Activated T-helper 1 cell treated with anti-CD3 and anti-CD28 coated beads, Interleukin-12 subunit alpha, Interleukin-12 subunit beta, Interleukin-2, Interleukin-4 antibody, amounts not matched to agents 30 ng/mL and 10 ng/mL and 1 ng/mL, durations not matched to agents 14 hours and 24 hours and 36 hours (primary cell): ENCODE measurements at regions of chr14 and their contacts with region 1.

Region 1: DNA sequence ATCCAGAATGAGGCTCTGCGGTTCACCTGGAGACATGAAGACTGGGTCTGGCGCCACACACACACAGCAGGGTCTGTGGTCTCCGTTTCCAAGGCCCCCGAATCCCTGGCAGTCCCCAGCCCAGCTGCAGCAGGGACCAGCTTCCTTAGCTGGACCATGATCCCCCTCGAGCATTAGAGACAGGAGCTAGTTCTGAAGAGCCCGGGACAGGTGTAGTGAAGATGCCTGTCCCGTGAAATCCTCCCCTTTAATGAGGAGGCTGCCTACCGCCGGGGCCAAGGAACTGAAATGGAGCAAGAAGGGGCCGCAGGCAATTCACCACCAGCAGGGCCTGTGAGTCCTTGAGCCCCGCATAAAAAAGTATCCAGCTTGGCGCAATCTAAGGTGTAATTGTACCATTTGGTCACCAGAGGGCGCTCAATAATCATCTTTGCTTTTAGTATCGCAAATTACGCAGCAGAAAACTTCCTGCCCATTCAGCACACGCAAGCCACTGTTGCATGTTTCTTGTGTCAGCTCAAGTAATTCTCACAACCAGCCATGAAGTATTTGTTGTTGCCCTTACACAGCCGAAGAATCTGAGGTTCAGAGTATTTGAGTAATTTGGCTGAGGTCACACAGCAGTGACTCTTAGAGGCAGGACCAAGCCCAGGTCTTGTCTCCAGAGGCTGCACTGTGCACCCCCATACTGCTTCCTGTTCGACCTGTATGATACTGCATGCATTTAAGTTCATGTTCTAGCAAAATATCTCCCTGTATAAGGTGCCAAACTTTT is 54.3 kb upstream of the PPP2R5C start:
- DNase-seq: peak; percentile 62
- H3K4me3 Mint-ChIP-seq: peak overlapping the region; percentile 0
- H3K27ac Mint-ChIP-seq: peak overlapping the region; percentile 63
- H3K4me1 Mint-ChIP-seq: peaks cover 31% of the 10 kb centered on the region
- H3K27me3 Mint-ChIP-seq: peaks cover 20% of the 10 kb centered on the region

Region 2: DNA sequence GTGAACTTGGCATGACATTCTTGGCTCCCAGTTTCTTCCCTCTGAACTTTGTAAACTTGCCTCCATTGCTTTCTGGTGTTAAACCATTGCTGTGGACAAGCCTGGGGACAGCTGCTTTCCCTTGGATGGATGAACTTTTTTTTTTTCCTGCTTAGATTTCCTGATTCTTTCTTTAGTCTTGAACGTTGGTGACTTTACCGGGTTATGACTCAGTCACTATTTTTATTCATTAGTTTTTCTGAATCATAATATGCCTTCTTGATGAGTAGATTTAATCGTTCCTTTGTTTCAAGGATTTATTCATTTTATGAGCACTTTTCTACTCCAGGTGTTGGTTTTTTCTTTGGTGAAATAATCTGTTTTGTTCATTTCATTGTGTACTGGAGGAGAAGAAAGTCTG is 648.7 kb before region 1 on chr14:
- intact Hi-C with region 1: no loop called
- DNase-seq: no peak
- H3K4me3 Mint-ChIP-seq: no peak overlapping the region
- H3K27ac Mint-ChIP-seq: no peak overlapping the region
- H3K4me1 Mint-ChIP-seq: no peaks in the 10 kb centered on the region
- H3K27me3 Mint-ChIP-seq: peaks cover 3% of the 10 kb centered on the region

Region 3: GRCh38 chr14:101336183-101336582 is 371.1 kb before region 1 on chr14:
- intact Hi-C with region 1: no loop called
- DNase-seq: no peak
- H3K4me3 Mint-ChIP-seq: no peak overlapping the region
- H3K27ac Mint-ChIP-seq: no peak overlapping the region
- H3K4me1 Mint-ChIP-seq: no peaks in the 10 kb centered on the region
- H3K27me3 Mint-ChIP-seq: peaks cover 6% of the 10 kb centered on the region

Region 4: GRCh38 chr14:101584055-101584859 is 123.0 kb before region 1 on chr14:
- intact Hi-C with region 1: no loop called
- DNase-seq: no peak
- H3K4me3 Mint-ChIP-seq: no peak overlapping the region
- H3K27ac Mint-ChIP-seq: no peak overlapping the region
- H3K4me1 Mint-ChIP-seq: no peaks in the 10 kb centered on the region
- H3K27me3 Mint-ChIP-seq: peaks cover 6% of the 10 kb centered on the region

Region 5: GRCh38 chr14:101687756-101688546 is 19.3 kb before region 1 on chr14:
- intact Hi-C with region 1: no loop called
- DNase-seq: no peak
- H3K4me3 Mint-ChIP-seq: no peak overlapping the region
- H3K27ac Mint-ChIP-seq: no peak overlapping the region
- H3K4me1 Mint-ChIP-seq: no peaks in the 10 kb centered on the region
- H3K27me3 Mint-ChIP-seq: peaks cover 13% of the 10 kb centered on the region

Region 6: DNA sequence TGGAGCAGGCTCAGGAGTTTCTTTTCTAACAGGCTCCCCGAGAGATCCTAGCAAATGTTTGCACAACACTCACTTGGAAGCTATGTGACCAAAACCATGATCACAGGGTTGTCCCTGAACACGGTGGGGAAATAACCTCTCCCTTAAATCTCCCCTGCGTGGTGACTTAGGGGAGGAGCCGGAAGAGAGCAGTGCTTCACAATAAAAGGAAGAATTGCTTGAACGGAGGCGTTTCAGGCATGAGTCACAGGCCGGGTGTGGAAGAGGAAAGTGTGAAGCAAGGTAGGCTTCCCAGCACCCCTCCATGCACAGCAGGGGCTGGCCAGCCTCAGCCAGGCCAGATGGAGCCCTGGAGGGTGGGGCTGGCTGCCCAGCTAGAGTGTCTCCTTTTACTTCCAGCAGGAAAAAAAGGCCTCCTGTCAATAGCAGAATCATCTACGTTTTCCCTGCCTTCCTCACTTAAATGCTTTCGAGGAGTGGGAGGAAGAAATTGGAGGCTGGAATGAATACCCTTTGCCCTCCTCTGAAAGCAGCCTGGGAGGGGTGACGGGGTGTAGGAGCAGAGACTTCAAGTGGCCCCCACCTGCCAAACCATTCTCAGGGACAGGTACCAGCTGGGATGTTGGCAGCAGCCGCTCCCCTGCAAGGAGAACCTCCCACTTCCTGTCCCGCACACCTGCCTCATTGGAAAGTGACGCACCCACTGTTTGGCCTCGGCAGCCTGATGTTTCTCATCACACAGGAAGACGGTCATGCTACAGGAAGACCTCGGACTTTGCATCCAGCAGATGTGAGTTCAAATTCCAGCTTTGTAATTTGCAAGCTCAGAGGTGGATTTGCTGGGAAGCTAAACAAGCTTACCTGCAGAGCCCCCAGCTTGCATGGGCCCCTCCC is 24.2 kb after region 1 on chr14:
- intact Hi-C with region 1: loop called (anchors 1 kb)
- DNase-seq: peak; percentile 79
- H3K4me3 Mint-ChIP-seq: peak overlapping the region; percentile 51
- H3K27ac Mint-ChIP-seq: peak overlapping the region; percentile 82
- H3K4me1 Mint-ChIP-seq: peaks cover 59% of the 10 kb centered on the region
- H3K27me3 Mint-ChIP-seq: no peaks in the 10 kb centered on the region

Region 7: GRCh38 chr14:101809671-101810514 is 102.6 kb after region 1 on chr14:
- intact Hi-C with region 1: loop called (anchors 1 kb)
- DNase-seq: peak; percentile 88
- H3K4me3 Mint-ChIP-seq: peak overlapping the region; percentile 96
- H3K27ac Mint-ChIP-seq: peak overlapping the region; percentile 100
- H3K4me1 Mint-ChIP-seq: peaks cover 52% of the 10 kb centered on the region
- H3K27me3 Mint-ChIP-seq: no peaks in the 10 kb centered on the region

Region 8: GRCh38 chr14:101876555-101876938 is 169.3 kb after region 1 on chr14:
- intact Hi-C with region 1: loop called (anchors 2 kb)
- DNase-seq: peak; percentile 46
- H3K4me3 Mint-ChIP-seq: peak overlapping the region; percentile 65
- H3K27ac Mint-ChIP-seq: peak overlapping the region; percentile 81
- H3K4me1 Mint-ChIP-seq: peaks cover 80% of the 10 kb centered on the region
- H3K27me3 Mint-ChIP-seq: no peaks in the 10 kb centered on the region

Region 9: DNA sequence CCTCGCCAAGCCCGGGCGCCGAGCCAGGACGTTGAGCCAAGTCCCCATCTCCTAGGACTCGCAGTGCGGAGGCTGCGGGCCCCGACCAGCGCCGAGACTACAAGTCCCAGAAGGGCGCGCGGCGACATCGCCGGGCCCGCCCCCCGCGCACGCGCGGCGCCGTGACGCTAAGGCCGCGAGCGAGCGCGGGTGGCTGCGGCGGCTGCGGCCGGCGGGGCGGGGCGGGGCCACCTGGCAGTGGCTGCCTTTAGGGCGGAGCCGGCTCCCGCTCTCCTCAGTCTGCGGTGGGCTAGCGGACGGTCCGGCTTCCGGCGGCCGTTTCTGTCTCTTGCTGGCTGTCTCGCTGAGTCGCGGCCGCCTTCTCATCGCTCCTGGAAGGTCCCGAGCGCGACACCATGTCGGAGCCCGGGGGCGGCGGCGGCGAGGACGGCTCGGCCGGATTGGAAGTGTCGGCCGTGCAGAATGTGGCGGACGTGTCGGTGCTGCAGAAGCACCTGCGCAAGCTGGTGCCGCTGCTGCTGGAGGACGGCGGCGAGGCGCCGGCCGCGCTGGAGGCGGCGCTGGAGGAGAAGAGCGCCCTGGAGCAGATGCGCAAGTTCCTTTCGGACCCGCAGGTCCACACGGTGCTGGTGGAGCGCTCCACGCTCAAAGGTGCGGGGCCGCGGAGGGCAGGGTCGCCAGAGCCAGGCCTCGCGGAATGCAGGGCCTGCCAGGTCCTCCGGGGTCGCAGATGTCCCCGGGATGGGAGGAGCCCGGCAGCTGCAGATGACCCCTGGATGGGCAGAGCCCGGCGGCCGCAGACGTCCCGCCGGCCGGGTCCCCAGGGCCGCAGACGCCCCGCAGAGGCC is 257.3 kb after region 1 on chr14 and contains the start of gene DYNC1H1:
- intact Hi-C with region 1: loop called (anchors 1 kb)
- DNase-seq: peak; percentile 89
- H3K4me3 Mint-ChIP-seq: peak within 1 kb of the TSS; percentile 90
- H3K27ac Mint-ChIP-seq: peak within 1 kb of the TSS; percentile 93
- H3K4me1 Mint-ChIP-seq: peaks cover 38% of the 10 kb centered on the region
- H3K27me3 Mint-ChIP-seq: peaks cover 2% of the 10 kb centered on the region
- total RNA-seq, gene DYNC1H1: 241 and 254 TPM in 2 replicates

Region 10: DNA sequence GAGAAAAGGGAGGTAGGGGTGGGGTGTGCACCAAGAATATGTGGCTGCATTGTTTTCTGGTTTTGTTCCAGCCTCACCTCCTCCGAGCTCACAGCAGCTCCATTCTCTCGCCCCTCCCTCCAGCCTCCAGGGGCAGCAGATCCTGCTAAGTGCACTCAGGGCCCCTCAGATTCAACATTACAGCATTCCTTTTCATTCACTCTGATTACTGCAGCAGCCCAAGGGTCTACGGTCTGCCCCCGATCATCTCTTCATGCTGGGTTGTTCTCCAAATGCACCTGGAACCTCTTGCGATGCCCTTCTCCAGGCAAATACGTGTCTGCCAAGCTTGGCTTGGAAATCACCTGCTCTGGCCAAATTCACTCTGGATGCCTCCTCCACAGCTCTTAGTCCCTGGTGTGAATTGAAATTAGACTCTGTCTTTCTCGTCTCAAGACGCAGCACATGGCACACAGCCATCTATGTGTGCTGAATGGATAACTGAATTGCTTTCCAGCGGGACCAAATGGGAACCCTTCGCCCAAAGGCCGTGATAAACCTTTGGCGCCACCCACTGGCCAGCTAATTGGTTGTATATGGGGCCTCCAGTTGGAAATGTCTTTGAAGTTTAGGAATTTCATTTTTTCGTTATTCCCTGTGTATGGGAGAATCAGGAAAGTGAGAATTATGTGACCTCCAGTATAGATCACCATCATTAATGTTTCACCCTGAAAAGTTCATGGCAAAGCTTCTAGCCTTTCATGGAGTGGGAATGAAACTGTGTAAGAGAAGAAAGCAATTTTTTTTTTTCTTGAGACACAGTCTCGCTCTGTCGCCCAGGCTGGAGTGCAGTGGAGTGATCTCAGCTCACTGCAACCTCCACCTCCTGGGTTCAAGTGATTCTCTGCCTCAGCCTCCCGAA is 389.2 kb after region 1 on chr14:
- intact Hi-C with region 1: loop called (anchors 1 kb)
- DNase-seq: peak; percentile 31
- H3K4me3 Mint-ChIP-seq: no peak overlapping the region
- H3K27ac Mint-ChIP-seq: no peak overlapping the region
- H3K4me1 Mint-ChIP-seq: peaks cover 24% of the 10 kb centered on the region
- H3K27me3 Mint-ChIP-seq: no peaks in the 10 kb centered on the region

Region 11: DNA sequence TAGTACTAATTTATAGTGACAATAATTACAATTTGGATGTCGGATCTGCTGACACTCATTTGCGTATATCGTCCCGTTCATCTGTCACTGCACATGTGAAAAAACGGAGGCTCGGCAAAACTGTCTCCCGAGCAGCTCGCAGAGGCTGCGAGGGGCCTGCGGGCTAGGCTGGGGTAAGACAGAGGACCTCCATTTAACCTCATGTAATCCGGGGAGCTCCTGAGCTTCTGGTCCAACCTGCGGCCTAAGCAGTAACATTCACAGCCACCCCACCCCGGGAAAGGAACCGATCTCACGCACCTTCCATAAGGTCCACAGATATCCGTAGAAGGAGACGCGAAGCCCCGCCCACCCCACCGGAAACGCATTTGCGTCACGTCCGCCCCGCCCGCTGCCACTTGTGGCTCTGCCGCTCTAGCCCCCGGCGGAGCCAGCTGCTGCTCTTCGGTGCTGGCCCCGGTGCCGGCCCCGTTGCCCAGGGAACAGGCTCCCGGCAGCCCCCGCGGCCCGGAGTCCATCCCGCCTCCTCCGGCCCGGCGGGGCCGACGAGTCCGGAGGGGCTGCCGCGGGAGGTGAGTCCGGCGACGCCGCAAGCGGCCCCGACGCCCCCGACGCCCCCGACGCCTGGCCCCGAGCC is 655.4 kb after region 1 on chr14 and contains the starts of genes CINP and TECPR2:
- intact Hi-C with region 1: loop called (anchors 2 kb)
- DNase-seq: peak; percentile 92
- H3K4me3 Mint-ChIP-seq: peak within 1 kb of the TSS; percentile 93
- H3K27ac Mint-ChIP-seq: peak within 1 kb of the TSS; percentile 91
- H3K4me1 Mint-ChIP-seq: peaks cover 32% of the 10 kb centered on the region
- H3K27me3 Mint-ChIP-seq: no peaks in the 10 kb centered on the region
- total RNA-seq, gene CINP: 39.6 and 42.5 TPM in 2 replicates
- total RNA-seq, gene TECPR2: 9.5 and 10.1 TPM in 2 replicates